ENCODE measurements at regions of chr1 and their contacts with region 1.

Region 1: GRCh38 chr1:168082008-168082876 is 54.5 kb downstream of the GPR161 start:
- DNase-seq: peak; percentile 76 to 94 (median 84)
- H3K4me3 ChIP-seq: no peak overlapping the region
- H3K27ac ChIP-seq: peak overlapping the region in 3 of 5 donors; percentile 11 to 84 (median 59)
- H3K4me1 ChIP-seq: peaks cover 3 to 46% of the 10 kb centered on the region in 2 donors
- H3K27me3 ChIP-seq: no peaks in the 10 kb centered on the region
- CTCF ChIP-seq: peak; percentile 73 to 89 (median 88)
- POLR2A ChIP-seq: no peak

Region 2: DNA sequence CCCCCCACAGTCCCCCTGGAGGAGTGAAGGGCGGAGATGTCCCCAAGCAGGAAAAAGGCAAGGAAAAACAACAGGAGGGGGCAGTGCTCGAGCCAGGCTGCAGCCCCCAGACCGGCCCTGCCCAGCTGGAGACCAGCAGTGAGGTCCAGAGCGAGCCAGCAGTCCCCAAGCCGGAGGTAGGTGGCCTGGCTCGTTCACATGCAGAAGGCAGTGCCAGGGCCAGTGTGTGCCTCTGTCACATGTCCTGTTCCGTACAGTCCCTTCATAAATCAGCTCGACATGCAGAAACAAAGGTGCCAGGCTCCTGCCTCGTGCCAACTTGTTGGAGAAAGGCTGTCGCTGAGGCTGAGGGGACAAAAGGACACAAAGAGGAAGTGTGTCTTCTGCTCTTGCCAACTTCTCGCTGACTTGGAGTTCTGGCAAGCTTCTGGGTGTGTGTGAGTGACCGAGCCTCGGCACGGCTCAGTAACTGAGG is 384.5 kb before region 1 on chr1:
- intact Hi-C with region 1: no loop called
- DNase-seq: peak; percentile 66 to 92 (median 84)
- H3K4me3 ChIP-seq: no peak overlapping the region
- H3K27ac ChIP-seq: peak overlapping the region in 1 of 5 donors; percentile 18
- H3K4me1 ChIP-seq: peaks cover 10 to 13% of the 10 kb centered on the region in 2 donors
- H3K27me3 ChIP-seq: no peaks in the 10 kb centered on the region
- CTCF ChIP-seq: no peak
- POLR2A ChIP-seq: no peak

Region 3: GRCh38 chr1:167721617-167722151 is 360.6 kb before region 1 on chr1 and contains the start of gene MPZL1:
- intact Hi-C with region 1: loop called in 1 of 2 experiments (anchors 10 kb)
- DNase-seq: peak; percentile 95 to 98 (median 96)
- H3K4me3 ChIP-seq: peak within 1 kb of the TSS; percentile 59 to 75 (median 66)
- H3K27ac ChIP-seq: peak within 1 kb of the TSS; percentile 51 to 94 (median 88)
- H3K4me1 ChIP-seq: peaks cover 0 to 46% of the 10 kb centered on the region in 2 donors
- H3K27me3 ChIP-seq: no peaks in the 10 kb centered on the region
- CTCF ChIP-seq: peak in 1 of 6 experiments; percentile 3
- POLR2A ChIP-seq: peak in 1 of 2 donors; percentile 82
- total RNA-seq, gene MPZL1: 32.5 to 101 (median 64.1) TPM

Region 4: GRCh38 chr1:168004531-168004930 is 77.7 kb before region 1 on chr1:
- intact Hi-C with region 1: loop called in 1 of 2 experiments (anchors 10 kb)
- DNase-seq: no peak
- H3K4me3 ChIP-seq: no peak overlapping the region
- H3K27ac ChIP-seq: no peak overlapping the region
- H3K4me1 ChIP-seq: no peaks in the 10 kb centered on the region
- H3K27me3 ChIP-seq: no peaks in the 10 kb centered on the region
- CTCF ChIP-seq: no peak
- POLR2A ChIP-seq: no peak

Region 5: GRCh38 chr1:168145184-168146159 is 63.2 kb after region 1 on chr1:
- intact Hi-C with region 1: loop called in 1 of 2 experiments (anchors 10 kb)
- DNase-seq: peak; percentile 84 to 92 (median 86)
- H3K4me3 ChIP-seq: no peak overlapping the region
- H3K27ac ChIP-seq: no peak overlapping the region
- H3K4me1 ChIP-seq: no peaks in the 10 kb centered on the region
- H3K27me3 ChIP-seq: no peaks in the 10 kb centered on the region
- CTCF ChIP-seq: peak; percentile 83 to 100 (median 91)
- POLR2A ChIP-seq: no peak

Measured in adrenal gland (tissue), 19 donors.